ENCODE measurements at regions of chr11 and their contacts with region 1.

Region 1: GRCh38 chr11:59753650-59754493 is 1.3 kb upstream of the STX3 start:
- DNase-seq: peak; percentile 90
- CTCF ChIP-seq: peak; percentile 80

Region 2: GRCh38 chr11:59767225-59767611 is 13.3 kb after region 1 on chr11:
- CTCF ChIA-PET with region 1: interaction called, 27 read pairs
- POLR2A ChIA-PET with region 1: no interaction called
- DNase-seq: no peak
- CTCF ChIP-seq: no peak

Region 3: DNA sequence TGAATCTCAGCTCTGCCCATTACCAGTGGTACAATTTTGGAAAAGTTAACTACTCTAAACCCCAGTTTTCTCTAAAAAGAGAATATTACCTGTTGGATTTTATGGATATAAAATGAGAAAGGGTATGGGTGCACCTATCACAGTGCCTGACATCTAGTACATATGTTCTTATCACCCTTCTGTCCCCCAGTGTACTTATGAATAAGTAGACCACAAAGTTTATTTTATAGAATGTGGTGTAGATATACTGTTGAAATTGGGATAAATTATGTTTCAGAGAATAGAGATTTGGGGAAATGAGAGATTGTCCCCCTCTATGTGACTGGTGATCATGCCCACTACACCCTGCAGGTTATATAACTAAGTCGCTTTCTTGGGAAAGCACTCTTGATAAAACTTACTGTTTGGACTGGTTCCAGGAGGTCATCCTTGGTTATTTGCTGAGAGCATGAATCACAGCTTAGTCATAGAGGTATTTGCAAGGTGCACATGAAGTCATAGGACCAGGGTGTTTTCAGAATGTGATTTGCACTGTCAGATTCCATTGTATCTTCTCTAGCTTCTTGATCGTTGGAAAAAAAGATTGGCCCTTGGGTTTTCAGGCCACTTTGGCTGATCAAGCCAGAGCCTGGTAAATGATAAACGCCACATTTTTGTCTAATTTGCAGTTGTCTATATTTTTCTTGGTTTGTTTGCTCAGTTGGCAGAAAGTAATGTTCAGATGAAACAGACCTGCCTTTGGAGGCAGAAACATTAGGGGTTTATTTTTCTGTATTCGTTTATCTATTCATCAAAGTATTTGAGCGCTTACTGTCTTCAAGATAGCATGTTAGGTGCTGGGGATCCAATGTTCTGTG is 22.6 kb after region 1 on chr11:
- CTCF ChIA-PET with region 1: interaction called, 10 read pairs
- POLR2A ChIA-PET with region 1: no interaction called
- DNase-seq: no peak
- CTCF ChIP-seq: no peak

Region 4: DNA sequence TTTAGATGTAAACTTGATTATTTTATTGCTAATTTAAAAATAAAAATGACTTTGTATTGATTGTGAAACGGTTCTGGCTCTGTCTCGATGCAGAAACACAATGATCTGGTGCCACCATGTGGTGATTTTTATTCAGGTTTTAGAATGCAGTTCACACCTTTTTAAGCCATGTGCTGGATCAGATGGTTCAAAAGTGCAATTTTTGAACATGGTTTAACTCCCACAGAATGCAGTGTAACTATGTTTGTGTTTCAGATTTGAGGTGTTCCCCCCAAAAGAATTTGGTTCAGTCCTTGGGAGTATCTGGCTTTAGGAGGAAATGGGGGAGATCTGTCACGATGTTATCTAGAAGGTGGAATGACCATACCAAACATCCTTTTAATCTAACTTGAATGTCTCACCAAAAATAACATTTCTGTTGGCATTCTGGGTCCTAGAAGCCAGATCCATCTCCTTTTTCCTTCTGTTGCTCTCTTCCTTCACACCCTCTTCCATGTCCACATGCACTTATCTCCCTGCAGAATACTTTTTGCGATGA is 48.8 kb after region 1 on chr11:
- CTCF ChIA-PET with region 1: interaction called, 137 read pairs
- POLR2A ChIA-PET with region 1: no interaction called
- DNase-seq: peak; percentile 31
- CTCF ChIP-seq: peak; percentile 58

Region 5: GRCh38 chr11:59810189-59810910 is 56.5 kb after region 1 on chr11 and contains the start of gene MRPL16:
- CTCF ChIA-PET with region 1: interaction called, 137 read pairs
- POLR2A ChIA-PET with region 1: no interaction called
- DNase-seq: peak; percentile 89
- CTCF ChIP-seq: no peak